Posterior cingulate gyrus (tissue), 11 donors: ENCODE measurements at regions of chr12 and their contacts with region 1.

Region 1: GRCh38 chr12:4604684-4605193 is 42.7 kb downstream of the DYRK4 start:
- DNase-seq: peak; percentile 68 to 97 (median 80)

Region 2: GRCh38 chr12:4648501-4649357 is 44.0 kb after region 1 on chr12 and contains the starts of genes AKAP3 and NDUFA9:
- intact Hi-C with region 1: loop called (anchors 1 kb)
- DNase-seq: peak; percentile 74 to 96 (median 84)